Uterus (tissue), 4 donors: ENCODE measurements at regions of chr4 and their contacts with region 1.

Region 1: GRCh38 chr4:102826890-102827673 is at the start of gene UBE2D3:
- DNase-seq: peak; percentile 95 to 96
- H3K4me3 ChIP-seq: peak within 1 kb of the TSS; percentile 60 to 85
- H3K27ac ChIP-seq: peak within 1 kb of the TSS; percentile 98 to 99
- H3K4me1 ChIP-seq: peaks cover 0 to 4% of the 10 kb centered on the region in 2 donors
- H3K27me3 ChIP-seq: no peaks in the 10 kb centered on the region
- CTCF ChIP-seq: no peak
- POLR2A ChIP-seq: peak; percentile 50 to 88
- total RNA-seq, gene UBE2D3: 261 to 496 (median 294) TPM

Region 2: GRCh38 chr4:102760645-102761295 is 66.3 kb before region 1 on chr4 and contains the start of gene MANBA:
- intact Hi-C with region 1: loop called (anchors 10 kb)
- DNase-seq: peak; percentile 73 to 77
- H3K4me3 ChIP-seq: peak within 1 kb of the TSS; percentile 64 to 66
- H3K27ac ChIP-seq: peak within 1 kb of the TSS; percentile 69 to 71
- H3K4me1 ChIP-seq: no peaks in the 10 kb centered on the region
- H3K27me3 ChIP-seq: no peaks in the 10 kb centered on the region
- CTCF ChIP-seq: peak in 1 of 4 experiments; percentile 15
- POLR2A ChIP-seq: peak; percentile 55 to 62
- total RNA-seq, gene MANBA: 6.4 to 41.5 (median 17.8) TPM

Region 3: GRCh38 chr4:102868781-102869568 is 41.9 kb after region 1 on chr4 and contains the start of gene CISD2:
- intact Hi-C with region 1: loop called (anchors 2 kb)
- DNase-seq: peak; percentile 90 to 91
- H3K4me3 ChIP-seq: peak within 1 kb of the TSS; percentile 52 to 56
- H3K27ac ChIP-seq: peak within 1 kb of the TSS; percentile 95 to 98
- H3K4me1 ChIP-seq: peaks cover 0 to 8% of the 10 kb centered on the region in 2 donors
- H3K27me3 ChIP-seq: no peaks in the 10 kb centered on the region
- CTCF ChIP-seq: peak in 3 of 4 experiments; percentile 6 to 28 (median 27)
- POLR2A ChIP-seq: peak; percentile 76 to 77
- total RNA-seq, gene CISD2: 3.8 to 30.0 (median 19.4) TPM